GM10248 (cell line): ENCODE measurements at regions of chr10 and their contacts with region 1.

Region 1: GRCh38 chr10:99484603-99485581 is 47.9 kb upstream of the NKX2-3 start:
- DNase-seq: no peak
- CTCF ChIP-seq: no peak

Region 2: GRCh38 chr10:99497343-99498025 is 12.6 kb after region 1 on chr10:
- CTCF ChIA-PET with region 1: interaction called, 13 read pairs
- POLR2A ChIA-PET with region 1: no interaction called
- DNase-seq: no peak
- CTCF ChIP-seq: no peak

Region 3: DNA sequence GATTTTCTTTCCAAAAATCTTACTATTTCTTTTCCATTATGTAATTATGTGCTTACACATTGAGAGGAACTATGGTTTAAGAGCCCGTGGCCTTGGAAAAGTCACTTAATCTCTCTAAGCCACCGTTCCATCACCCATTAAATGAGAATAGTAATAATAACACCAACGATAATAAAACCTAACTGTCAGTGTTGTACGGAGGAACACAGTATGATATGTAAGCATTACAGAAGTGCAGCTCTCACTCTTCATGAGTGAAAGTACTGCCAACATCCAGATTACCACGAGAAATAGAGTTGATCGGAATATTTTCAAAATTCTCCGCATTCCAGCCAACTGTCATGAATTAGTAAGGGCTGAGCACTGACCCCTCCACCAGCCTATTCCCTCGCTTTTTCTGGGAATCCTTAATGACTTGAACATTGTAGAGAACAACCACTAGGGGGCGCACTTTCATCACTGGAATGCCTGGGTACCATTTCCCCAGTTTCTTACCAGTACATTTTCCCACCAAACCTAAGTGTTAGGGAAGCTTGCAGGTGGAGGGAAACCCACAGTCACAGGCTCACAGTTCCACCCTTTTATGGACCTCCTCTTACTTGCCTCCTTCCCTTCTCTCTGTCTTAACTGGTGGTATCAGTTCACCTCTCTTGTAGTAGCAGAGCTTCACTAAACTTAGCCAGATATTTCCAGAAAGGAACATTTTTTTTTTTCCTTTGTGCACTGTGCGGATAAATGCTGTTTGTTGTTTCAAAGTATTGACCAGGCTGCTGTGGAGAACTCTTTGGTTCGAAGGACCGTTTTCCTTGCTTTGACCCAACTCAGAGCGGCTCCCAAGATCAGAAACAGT is 75.6 kb after region 1 on chr10:
- CTCF ChIA-PET with region 1: no interaction called
- POLR2A ChIA-PET with region 1: no interaction called
- DNase-seq: peak; percentile 45
- CTCF ChIP-seq: peak; percentile 65